ENCODE measurements at regions of chr6 and their contacts with region 1.

Region 1: DNA sequence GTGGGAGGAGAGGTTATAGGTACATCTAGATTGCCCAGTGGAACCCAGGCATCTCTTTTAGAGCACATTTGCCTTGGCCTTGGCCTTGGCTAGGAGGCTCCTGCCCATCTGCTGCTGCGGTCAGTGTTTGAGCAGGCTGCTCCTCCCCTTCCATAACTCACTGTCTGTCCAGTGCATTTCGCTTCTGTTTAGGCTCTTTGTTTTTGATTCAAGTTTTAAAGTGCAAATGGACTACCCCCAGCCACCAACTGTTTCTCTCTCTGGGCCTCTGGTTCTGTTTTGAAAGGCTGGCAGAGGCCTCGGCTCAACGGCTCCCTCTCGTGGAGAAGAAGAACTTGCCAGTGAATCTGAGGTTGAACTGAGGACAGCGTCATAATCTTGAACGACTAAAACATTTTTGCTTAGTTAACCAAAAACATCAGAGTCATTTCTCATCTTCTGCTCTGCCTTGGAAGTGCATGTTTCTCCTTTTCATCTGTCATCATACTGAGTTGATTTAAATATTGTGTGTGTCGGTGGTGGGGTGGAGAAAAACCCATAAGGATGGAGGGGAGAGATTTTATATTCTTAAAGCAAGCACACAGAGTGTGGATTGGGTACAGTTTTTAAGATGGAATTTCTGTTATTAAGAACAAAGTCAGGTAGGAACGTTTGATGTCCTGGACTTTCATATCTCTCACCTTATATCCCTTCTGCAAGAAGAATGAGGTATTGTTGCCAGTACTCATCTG is 171.4 kb downstream of the DTNBP1 start:
- DNase-seq: peak; percentile 64 to 74 (median 68)
- H3K4me3 ChIP-seq: no peak overlapping the region
- H3K4me3 Mint-ChIP-seq: no peak overlapping the region
- H3K27ac ChIP-seq: peak overlapping the region in 1 of 2 donors; percentile 66
- H3K27ac Mint-ChIP-seq: peak overlapping the region in 6 of 7 donors; percentile 37 to 87 (median 72)
- H3K4me1 ChIP-seq: no peaks in the 10 kb centered on the region
- H3K4me1 Mint-ChIP-seq: peaks cover 20% of the 10 kb centered on the region
- H3K27me3 ChIP-seq: no peaks in the 10 kb centered on the region
- H3K27me3 Mint-ChIP-seq: no peaks in the 10 kb centered on the region
- CTCF ChIP-seq: peak; percentile 91

Region 2: GRCh38 chr6:15621203-15622044 is 130.0 kb after region 1 on chr6:
- intact Hi-C with region 1: loop called in 1 of 2 experiments (anchors 5 kb)
- DNase-seq: peak; percentile 71 to 83 (median 77)
- H3K4me3 ChIP-seq: peak overlapping the region in 1 of 3 experiments; percentile 16
- H3K4me3 Mint-ChIP-seq: peak overlapping the region; percentile 49 to 70
- H3K27ac ChIP-seq: peak overlapping the region; percentile 84 to 87
- H3K27ac Mint-ChIP-seq: peak overlapping the region; percentile 92 to 98 (median 97)
- H3K4me1 ChIP-seq: peaks cover 21 to 27% of the 10 kb centered on the region in 2 donors
- H3K4me1 Mint-ChIP-seq: peaks cover 25% of the 10 kb centered on the region
- H3K27me3 ChIP-seq: no peaks in the 10 kb centered on the region
- H3K27me3 Mint-ChIP-seq: no peaks in the 10 kb centered on the region
- CTCF ChIP-seq: no peak